RWPE1 (cell line): ENCODE measurements at regions of chr12 and their contacts with region 1.

Region 1: DNA sequence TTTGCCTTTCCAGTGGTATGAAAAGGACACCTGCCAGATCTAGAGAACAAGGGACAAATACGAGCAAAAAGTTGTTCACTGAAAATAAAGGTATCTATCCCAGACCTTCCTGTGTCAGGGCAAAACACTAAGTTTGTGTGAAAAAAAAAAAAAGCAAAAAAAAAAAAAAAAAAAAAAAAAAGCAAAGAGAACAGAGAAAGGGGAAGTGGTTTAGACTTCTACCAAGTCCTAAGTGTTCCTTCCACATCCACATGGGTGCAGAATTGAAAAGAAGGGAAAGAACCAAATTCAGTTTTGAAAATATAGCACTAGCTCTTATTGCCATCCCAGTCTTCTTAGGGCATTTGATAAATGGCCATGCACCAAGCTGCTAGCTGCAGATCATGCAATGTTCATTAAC is 41.7 kb downstream of the ZCRB1 start:
- DNase-seq: no peak
- H3K27ac ChIP-seq: no peak overlapping the region
- CTCF ChIP-seq: no peak

Region 2: GRCh38 chr12:43151441-43151981 is 867.4 kb after region 1 on chr12:
- CTCF ChIA-PET with region 1: interaction called, 10 read pairs
- POLR2A ChIA-PET with region 1: no interaction called
- DNase-seq: no peak
- H3K27ac ChIP-seq: no peak overlapping the region
- CTCF ChIP-seq: no peak